Spleen (tissue), 13 donors: ENCODE measurements at regions of chr11 and their contacts with region 1.

Region 1: GRCh38 chr11:76444384-76445123 is at the start of gene EMSY:
- DNase-seq: peak; percentile 98
- H3K4me3 ChIP-seq: peak within 1 kb of the TSS; percentile 86 to 100 (median 98)
- H3K27ac ChIP-seq: peak within 1 kb of the TSS; percentile 83 to 95 (median 93)
- H3K4me1 ChIP-seq: peaks cover 13 to 59% (median 27%) of the 10 kb centered on the region in 6 donors
- H3K27me3 ChIP-seq: no peaks in the 10 kb centered on the region
- CTCF ChIP-seq: peak in 2 of 11 experiments; percentile 9 to 30
- POLR2A ChIP-seq: peak in 2 of 3 donors; percentile 94
- total RNA-seq, gene EMSY: 28.2 to 81.8 (median 37.4) TPM

Region 2: DNA sequence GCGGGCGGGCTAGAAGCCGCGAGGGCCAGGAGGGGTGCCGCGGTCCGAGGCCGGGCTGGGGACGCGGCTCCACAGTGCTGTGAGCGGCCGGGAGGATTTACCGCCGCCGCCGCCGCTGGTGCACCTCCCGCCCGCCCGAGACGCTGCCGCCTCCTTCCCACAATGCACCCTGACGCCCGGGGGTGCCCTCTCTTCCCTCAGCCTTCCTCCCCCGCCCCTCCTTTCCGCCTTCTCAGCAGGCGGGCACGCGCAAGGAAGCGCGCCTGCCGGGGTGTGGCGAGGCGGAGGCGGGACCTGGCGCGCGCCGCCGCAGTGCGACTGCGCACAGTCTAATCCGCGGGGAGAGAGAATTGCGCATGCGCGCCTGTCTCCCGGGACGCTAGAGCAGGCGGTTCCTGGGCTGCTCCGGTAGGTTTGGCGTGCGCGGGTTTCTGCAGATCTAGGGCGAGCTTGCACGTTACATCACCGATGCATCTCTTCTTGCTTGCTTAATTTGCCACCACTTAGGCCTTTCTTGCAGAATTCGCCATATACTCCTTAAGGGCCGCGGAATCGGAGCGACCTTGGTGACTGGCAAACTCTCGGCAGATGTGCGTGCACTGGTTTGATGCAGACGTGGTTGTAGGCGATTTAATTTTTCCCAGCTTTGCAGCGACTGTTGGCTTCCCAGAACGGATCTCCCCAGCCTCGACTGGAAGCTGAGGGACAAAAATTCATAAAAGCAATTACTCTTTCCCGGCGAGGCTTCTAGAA is 63.4 kb before region 1 on chr11 and contains the starts of genes GVQW3 and THAP12:
- intact Hi-C with region 1: loop called (anchors 5 kb)
- DNase-seq: peak; percentile 99
- H3K4me3 ChIP-seq: peak within 1 kb of the TSS; percentile 72 to 99 (median 92)
- H3K27ac ChIP-seq: peak within 1 kb of the TSS; percentile 75 to 95 (median 90)
- H3K4me1 ChIP-seq: peaks cover 23 to 80% (median 60%) of the 10 kb centered on the region in 6 donors
- H3K27me3 ChIP-seq: no peaks in the 10 kb centered on the region
- CTCF ChIP-seq: peak in 5 of 11 experiments; percentile 3 to 53 (median 40)
- POLR2A ChIP-seq: peak in 1 of 3 donors; percentile 80
- total RNA-seq, gene GVQW3: 2.9 to 5.6 (median 4.5) TPM
- total RNA-seq, gene THAP12: 37.6 to 51.8 (median 44.0) TPM

Region 3: DNA sequence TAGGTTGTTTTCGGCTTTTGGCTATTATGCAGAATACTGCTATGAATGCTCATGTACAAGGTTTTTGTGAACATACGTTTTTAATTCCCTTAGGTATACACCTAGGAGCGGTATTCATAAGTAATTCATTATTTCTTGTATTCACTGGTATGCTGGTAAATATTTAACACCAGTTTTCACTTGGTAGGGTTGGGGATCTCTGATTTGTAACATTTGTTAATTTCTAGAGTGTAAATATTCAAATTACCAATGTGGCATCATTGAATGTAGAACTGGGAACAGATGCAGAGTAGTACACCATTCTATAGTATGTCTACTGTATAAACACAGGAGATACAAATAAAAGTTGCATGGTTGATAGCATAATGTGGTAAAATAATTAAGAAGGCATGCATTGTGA is 47.2 kb before region 1 on chr11:
- intact Hi-C with region 1: no loop called
- DNase-seq: no peak
- H3K4me3 ChIP-seq: no peak overlapping the region
- H3K27ac ChIP-seq: no peak overlapping the region
- H3K4me1 ChIP-seq: no peaks in the 10 kb centered on the region
- H3K27me3 ChIP-seq: no peaks in the 10 kb centered on the region
- CTCF ChIP-seq: no peak
- POLR2A ChIP-seq: no peak

Region 4: DNA sequence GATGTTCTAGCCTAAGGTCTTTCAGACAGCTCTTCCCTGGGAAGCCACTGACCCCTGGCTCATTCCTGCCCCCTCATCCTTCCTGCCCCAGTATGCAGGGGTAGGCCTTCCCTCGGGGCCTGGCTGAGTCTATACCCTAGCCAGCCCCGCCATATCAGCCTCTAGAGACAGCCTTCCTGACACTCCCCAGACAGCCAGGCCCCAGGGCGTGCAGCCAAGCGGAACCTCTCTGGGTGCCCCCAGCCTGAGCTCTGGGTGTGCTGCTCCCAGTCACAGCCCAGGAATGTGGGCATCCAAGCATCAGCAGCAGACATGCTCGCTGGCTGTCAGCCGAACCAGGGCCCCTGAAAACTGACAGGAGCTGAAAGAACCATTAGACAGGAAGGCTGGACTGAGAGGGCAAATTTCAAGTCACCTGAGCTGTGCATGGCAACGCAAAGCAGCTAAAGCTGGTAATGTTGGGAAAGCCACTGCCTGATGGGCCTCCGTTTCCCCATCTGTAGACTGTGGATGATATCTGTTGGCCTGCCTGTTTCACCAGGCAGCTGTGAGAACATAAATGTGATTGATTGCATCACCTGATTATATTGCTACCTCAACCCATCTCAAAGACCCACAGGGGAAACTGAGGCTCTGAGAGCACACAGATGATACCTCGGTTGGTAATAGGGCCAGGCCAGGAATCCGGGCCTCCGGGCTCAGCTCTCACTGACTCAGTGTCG is 132.8 kb after region 1 on chr11:
- intact Hi-C with region 1: no loop called
- DNase-seq: no peak
- H3K4me3 ChIP-seq: no peak overlapping the region
- H3K27ac ChIP-seq: peak overlapping the region; percentile 66 to 92 (median 84)
- H3K4me1 ChIP-seq: peaks cover 20 to 49% (median 29%) of the 10 kb centered on the region in 6 donors
- H3K27me3 ChIP-seq: peaks cover 0 to 4% (median 0%) of the 10 kb centered on the region in 7 donors
- CTCF ChIP-seq: no peak
- POLR2A ChIP-seq: no peak